A549 (cell line): ENCODE measurements at regions of chr12 and their contacts with region 1.

Region 1: DNA sequence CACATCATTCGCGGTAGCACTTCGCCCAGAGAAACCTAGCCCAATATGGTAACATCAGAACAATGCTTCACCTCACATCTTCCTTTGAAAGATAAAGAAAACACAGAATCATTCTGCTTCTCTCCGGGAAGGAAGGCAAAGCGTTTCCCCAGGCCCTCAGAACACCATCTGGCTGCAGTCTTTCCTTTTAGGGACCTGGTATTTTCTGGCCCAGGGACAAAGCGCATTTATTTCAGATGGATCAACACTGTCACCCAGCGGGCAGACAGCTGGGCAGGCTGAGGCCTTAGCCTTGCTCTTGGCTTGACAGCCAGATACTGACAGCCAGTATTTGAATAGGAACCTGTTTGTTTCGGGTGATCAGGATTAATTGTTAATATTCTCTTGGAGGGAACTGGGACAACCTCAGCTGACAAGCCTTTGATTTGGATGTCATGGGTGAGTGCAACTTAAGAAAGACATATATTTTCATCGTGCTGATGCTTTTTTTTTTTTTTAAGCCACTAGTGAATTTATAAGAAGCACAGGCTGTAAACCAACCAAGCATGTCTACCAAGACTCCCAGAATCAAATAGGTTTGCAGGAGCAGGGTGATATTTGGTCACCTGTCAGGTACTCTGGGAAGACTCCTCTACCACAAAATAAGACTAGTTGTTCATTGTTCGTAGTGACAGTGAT is 118.9 kb downstream of the VEZT start:
- DNase-seq: peak; percentile 77 to 90
- ATAC-seq: peak; percentile 85 to 88
- H3K4me3 ChIP-seq: no peak overlapping the region
- H3K27ac ChIP-seq: peak overlapping the region; percentile 72 to 87
- H3K4me1 ChIP-seq: peaks cover 66% of the 10 kb centered on the region
- CTCF ChIP-seq: peak; percentile 99
- EP300 ChIP-seq: no peak
- POLR2A ChIP-seq: no peak
- RAD21 ChIP-seq: peak; percentile 99 to 100

Region 2: DNA sequence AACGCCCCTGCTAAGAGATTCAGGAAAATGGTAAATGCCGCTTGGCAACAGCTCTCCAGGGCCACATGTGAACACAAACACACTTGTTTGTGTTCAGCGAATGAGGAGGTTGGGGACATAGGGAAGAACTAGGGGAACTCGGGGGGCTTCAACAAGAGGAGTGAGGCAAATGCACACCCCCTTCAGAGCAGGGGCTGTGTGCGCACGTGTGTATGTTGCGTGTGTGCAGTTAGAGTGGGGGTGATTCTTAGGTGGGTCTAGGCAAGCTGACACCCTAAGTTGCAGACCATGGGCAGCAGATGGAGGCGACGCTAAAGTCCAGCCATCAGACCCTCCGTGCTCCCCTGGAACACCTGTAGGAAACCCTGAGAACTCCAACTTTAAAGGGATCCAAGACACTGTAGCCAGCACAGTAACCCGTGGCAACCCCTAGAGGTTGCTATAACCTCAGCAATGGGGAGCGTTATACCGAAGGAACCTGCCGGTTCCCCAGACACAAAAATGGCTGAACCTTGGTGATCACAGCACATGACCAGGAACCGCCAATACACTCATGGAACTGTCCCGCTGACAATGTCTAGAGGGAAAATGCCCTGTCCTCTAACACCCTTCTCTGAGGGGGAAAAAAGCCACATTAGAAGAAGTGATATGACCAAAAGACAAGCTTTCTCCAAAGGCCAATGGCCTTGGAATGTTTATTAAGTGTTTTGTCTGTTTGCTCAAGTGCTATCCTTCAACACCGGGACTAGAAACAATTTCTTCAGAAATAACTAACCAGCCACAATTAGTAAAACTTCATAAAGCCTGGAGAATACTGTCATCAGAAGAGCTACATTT is 790.4 kb before region 1 on chr12:
- CTCF ChIA-PET with region 1: interaction called, 18 read pairs
- POLR2A ChIA-PET with region 1: no interaction called
- DNase-seq: peak; percentile 70 to 75
- ATAC-seq: peak; percentile 90 to 98
- H3K4me3 ChIP-seq: no peak overlapping the region
- H3K27ac ChIP-seq: no peak overlapping the region
- H3K4me1 ChIP-seq: no peaks in the 10 kb centered on the region
- CTCF ChIP-seq: peak; percentile 56
- EP300 ChIP-seq: no peak
- POLR2A ChIP-seq: no peak
- RAD21 ChIP-seq: peak; percentile 79 to 91

Region 3: GRCh38 chr12:95117178-95117599 is 219.3 kb before region 1 on chr12:
- CTCF ChIA-PET with region 1: interaction called, 33 read pairs
- POLR2A ChIA-PET with region 1: no interaction called
- DNase-seq: peak; percentile 65 to 82
- ATAC-seq: peak; percentile 79 to 81
- H3K4me3 ChIP-seq: no peak overlapping the region
- H3K27ac ChIP-seq: peak overlapping the region; percentile 73 to 86
- H3K4me1 ChIP-seq: peaks cover 59% of the 10 kb centered on the region
- CTCF ChIP-seq: peak; percentile 83
- EP300 ChIP-seq: no peak
- POLR2A ChIP-seq: no peak
- RAD21 ChIP-seq: peak; percentile 93

Region 4: GRCh38 chr12:95243497-95244183 is 92.9 kb before region 1 on chr12:
- CTCF ChIA-PET with region 1: interaction called, 31 read pairs
- POLR2A ChIA-PET with region 1: no interaction called
- DNase-seq: no peak
- ATAC-seq: no peak
- H3K4me3 ChIP-seq: no peak overlapping the region
- H3K27ac ChIP-seq: 0 out of 6 replicates have a peak overlapping the region, but pooled peaks of 1 of the 2 experiments have one; percentile 9
- H3K4me1 ChIP-seq: peaks cover 81% of the 10 kb centered on the region
- CTCF ChIP-seq: no peak
- EP300 ChIP-seq: no peak
- POLR2A ChIP-seq: no peak
- RAD21 ChIP-seq: no peak

Region 5: DNA sequence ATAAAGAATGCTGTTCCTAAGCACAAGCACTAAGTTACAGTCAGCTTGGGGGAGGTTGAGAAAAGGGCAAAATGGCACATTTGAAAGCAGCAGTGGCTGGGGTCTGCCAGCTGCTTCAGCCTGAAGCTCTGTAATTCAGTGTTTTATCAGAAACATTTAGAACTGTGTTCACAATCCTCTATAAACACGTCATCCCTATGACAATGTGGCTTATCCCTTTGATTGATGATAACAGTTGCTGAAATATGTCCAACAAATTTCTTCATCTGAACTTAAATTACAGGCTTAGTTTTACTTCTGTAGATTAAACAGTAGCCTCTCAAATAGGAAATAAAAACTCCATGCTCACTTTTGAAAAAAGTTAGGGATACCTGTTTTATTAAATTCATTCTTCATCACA is 10.1 kb before region 1 on chr12:
- CTCF ChIA-PET with region 1: interaction called, 22 read pairs
- POLR2A ChIA-PET with region 1: no interaction called
- DNase-seq: peak; percentile 53 to 87
- ATAC-seq: peak; percentile 81 to 84
- H3K4me3 ChIP-seq: no peak overlapping the region
- H3K27ac ChIP-seq: peak overlapping the region; percentile 88 to 89
- H3K4me1 ChIP-seq: peaks cover 77% of the 10 kb centered on the region
- CTCF ChIP-seq: no peak
- EP300 ChIP-seq: peak; percentile 82 to 85; a peak in 4 of 5 replicates
- POLR2A ChIP-seq: no peak
- RAD21 ChIP-seq: peak in 1 of 2 experiments; percentile 36; a peak in 3 of 5 replicates

Region 6: GRCh38 chr12:95385246-95386035 is 48.9 kb after region 1 on chr12:
- CTCF ChIA-PET with region 1: no interaction called
- POLR2A ChIA-PET with region 1: no interaction called
- DNase-seq: no peak
- ATAC-seq: peak; percentile 24 to 67; a peak in 3 of 6 replicates
- H3K4me3 ChIP-seq: no peak overlapping the region
- H3K27ac ChIP-seq: no peak overlapping the region
- H3K4me1 ChIP-seq: no peaks in the 10 kb centered on the region; the same call in 2 of the 3 replicates
- CTCF ChIP-seq: no peak
- EP300 ChIP-seq: no peak
- POLR2A ChIP-seq: no peak
- RAD21 ChIP-seq: no peak

Region 7: GRCh38 chr12:95532851-95533250 is 196.3 kb after region 1 on chr12:
- CTCF ChIA-PET with region 1: interaction called, 12 read pairs
- POLR2A ChIA-PET with region 1: no interaction called
- DNase-seq: no peak
- ATAC-seq: no peak
- H3K4me3 ChIP-seq: no peak overlapping the region
- H3K27ac ChIP-seq: no peak overlapping the region
- H3K4me1 ChIP-seq: no peaks in the 10 kb centered on the region
- CTCF ChIP-seq: no peak
- EP300 ChIP-seq: no peak
- POLR2A ChIP-seq: no peak
- RAD21 ChIP-seq: no peak